ENCODE measurements at regions of chr6 and their contacts with region 1.

Region 1: DNA sequence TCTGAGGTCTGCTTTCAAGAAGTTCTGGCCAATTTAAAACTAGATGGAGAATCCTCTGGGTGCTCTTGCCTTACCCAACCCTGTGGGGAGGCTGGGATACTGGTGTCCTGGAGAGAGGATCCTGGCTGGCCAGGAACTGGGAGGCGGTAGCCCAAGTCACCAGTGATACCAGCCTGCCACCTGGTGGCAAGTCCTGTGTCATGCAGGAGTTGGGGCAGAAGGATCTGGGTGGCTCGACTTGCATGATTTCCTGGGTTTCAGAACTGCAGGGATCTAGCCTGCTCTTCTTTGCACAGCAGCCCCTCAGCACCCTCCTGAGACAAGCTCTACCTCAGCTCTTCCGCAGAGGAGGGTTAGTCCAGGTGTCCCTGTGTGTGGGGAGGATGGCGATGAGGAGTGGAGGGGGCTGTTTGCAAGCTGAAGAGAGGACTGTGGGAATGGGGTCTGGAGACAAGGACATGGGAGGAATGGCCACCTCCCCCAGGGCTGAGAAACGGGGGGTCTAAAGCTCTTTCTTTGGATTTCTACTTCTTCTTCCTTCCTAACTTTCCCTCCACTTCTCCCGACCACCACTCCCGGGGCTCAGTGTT is 4.2 kb downstream of the KCNK17 start:
- DNase-seq: peak; percentile 79 to 84 (median 83)
- ATAC-seq: peak; percentile 86 to 94 (median 90)
- H3K4me3 ChIP-seq: no peak overlapping the region
- H3K27ac ChIP-seq: no peak overlapping the region
- H3K4me1 ChIP-seq: peaks cover 0 to 18% (median 0%) of the 10 kb centered on the region in 4 donors
- H3K27me3 ChIP-seq: peaks cover 0 to 10% of the 10 kb centered on the region in 2 donors
- CTCF ChIP-seq: peak; percentile 91 to 94 (median 92)
- POLR2A ChIP-seq: no peak

Region 2: DNA sequence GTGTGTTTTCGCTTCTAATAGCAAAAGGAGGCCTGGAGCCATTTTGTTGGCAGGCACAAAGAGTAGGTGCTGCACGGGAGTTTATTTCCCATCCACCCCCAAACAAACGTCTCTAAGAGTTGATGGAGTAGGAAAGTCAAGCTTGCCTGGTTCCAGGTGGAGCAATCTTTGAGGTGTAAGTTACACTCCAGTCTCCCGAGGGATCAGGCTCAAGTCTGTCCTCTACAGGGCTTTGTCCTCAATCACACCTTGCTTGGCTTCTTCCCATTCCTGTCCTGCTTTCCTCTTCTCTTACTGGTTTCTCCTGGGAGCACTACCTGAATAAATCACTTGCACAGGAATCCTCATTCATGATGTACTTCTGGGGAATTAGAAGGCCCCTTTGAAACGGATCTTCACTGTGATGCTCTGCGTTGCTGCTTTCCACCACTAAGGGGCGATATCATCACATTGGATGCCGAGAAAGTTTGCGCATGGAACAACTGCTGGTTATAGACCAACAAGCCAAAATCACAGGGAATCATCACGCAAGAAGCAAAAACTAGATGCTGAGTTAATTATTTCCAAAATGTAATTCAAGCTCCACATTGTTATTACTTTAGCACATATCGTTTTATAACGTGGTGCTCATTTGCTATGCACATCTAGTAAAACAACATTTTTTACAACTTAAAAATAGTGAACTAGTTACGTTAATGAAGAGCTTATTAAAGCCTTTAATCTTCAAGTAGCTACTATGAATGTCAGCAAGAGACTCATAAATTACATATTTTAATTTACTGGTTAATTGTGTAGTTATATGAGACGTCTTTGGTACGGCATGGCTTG is 438.1 kb before region 1 on chr6:
- intact Hi-C with region 1: loop called (anchors 5 to 10 kb)
- DNase-seq: peak in 2 of 3 donors; percentile 55 to 56
- ATAC-seq: peak; percentile 88 to 94 (median 90)
- H3K4me3 ChIP-seq: no peak overlapping the region
- H3K27ac ChIP-seq: no peak overlapping the region
- H3K4me1 ChIP-seq: no peaks in the 10 kb centered on the region
- H3K27me3 ChIP-seq: no peaks in the 10 kb centered on the region
- CTCF ChIP-seq: peak; percentile 89 to 94 (median 92)
- POLR2A ChIP-seq: no peak

Region 3: DNA sequence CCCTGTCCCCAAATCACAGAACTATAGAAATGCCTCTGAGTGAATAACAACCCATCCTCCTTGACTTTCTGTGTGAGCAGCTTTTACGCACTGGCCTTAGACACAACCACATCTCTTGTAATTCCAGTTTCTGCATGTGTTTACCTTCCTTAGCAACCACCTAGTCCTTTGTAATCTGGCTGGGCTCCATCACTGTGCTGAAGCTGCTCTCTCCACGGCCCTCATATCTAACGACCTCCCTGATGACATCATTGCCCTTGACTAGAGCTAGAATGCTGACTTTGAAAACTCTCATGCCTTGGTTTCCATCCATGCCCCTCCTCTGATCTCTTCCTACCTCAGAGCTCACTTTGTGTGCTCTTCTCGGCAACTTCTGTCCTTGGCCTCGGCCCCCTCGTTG is 291.9 kb before region 1 on chr6:
- intact Hi-C with region 1: no loop called
- DNase-seq: no peak
- ATAC-seq: no peak
- H3K4me3 ChIP-seq: no peak overlapping the region
- H3K27ac ChIP-seq: no peak overlapping the region
- H3K4me1 ChIP-seq: no peaks in the 10 kb centered on the region
- H3K27me3 ChIP-seq: no peaks in the 10 kb centered on the region
- CTCF ChIP-seq: no peak
- POLR2A ChIP-seq: no peak

Region 4: GRCh38 chr6:39166189-39166911 is 143.7 kb before region 1 on chr6:
- intact Hi-C with region 1: loop called in 1 of 2 experiments (anchors 5 kb)
- DNase-seq: peak; percentile 85 to 87 (median 86)
- ATAC-seq: peak; percentile 88 to 97 (median 94)
- H3K4me3 ChIP-seq: no peak overlapping the region
- H3K27ac ChIP-seq: no peak overlapping the region
- H3K4me1 ChIP-seq: no peaks in the 10 kb centered on the region
- H3K27me3 ChIP-seq: no peaks in the 10 kb centered on the region
- CTCF ChIP-seq: peak; percentile 86 to 97 (median 90)
- POLR2A ChIP-seq: no peak

Region 5: GRCh38 chr6:39361657-39362486 is 51.8 kb after region 1 on chr6:
- intact Hi-C with region 1: no loop called
- DNase-seq: peak; percentile 64 to 69 (median 67)
- ATAC-seq: peak; percentile 88 to 95 (median 92)
- H3K4me3 ChIP-seq: no peak overlapping the region
- H3K27ac ChIP-seq: no peak overlapping the region
- H3K4me1 ChIP-seq: no peaks in the 10 kb centered on the region
- H3K27me3 ChIP-seq: no peaks in the 10 kb centered on the region
- CTCF ChIP-seq: peak; percentile 61 to 79 (median 76)
- POLR2A ChIP-seq: no peak

Measured in right lobe of liver (tissue), 6 donors.